Panc1 (cell line): ENCODE measurements at regions of chr14 and their contacts with region 1.

Region 1: DNA sequence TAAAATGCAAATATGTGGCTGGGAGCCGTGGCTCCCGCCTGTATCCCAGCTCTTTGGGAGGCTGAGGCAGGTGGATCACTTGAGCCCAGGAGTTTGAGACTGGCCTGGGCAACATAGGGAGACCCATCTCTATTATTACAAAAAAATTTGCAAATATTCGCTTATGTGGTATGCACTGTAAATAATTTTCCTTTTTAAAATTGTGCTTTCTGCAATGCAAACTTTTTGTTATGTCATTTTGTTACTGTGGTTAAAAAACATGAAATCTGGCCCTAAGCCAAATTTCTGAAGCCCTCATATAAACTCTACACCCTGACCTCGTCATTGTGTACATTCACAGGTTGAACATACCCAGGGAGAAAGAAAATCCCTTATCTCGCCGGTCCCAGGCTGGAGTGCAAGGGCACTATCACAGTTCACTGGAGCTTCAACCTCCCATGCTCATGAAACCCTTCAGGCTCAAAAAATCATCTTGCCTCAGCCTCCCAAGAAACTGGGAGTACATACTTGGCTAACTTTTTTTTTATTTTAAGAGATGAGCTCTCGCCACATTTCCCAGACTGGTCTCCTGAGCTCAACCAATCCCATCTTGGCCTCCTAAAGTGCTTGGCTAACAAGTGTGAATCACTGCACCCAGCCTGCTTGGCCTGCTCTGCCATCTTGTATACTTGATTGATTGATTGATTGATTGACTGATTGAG is 24.7 kb downstream of the TRAPPC6B start:
- DNase-seq: no peak
- ATAC-seq: no peak
- H3K4me3 ChIP-seq: no peak overlapping the region
- H3K27ac ChIP-seq: no peak overlapping the region
- H3K4me1 ChIP-seq: no peaks in the 10 kb centered on the region
- H3K27me3 ChIP-seq: no peaks in the 10 kb centered on the region
- CTCF ChIP-seq: no peak

Region 2: DNA sequence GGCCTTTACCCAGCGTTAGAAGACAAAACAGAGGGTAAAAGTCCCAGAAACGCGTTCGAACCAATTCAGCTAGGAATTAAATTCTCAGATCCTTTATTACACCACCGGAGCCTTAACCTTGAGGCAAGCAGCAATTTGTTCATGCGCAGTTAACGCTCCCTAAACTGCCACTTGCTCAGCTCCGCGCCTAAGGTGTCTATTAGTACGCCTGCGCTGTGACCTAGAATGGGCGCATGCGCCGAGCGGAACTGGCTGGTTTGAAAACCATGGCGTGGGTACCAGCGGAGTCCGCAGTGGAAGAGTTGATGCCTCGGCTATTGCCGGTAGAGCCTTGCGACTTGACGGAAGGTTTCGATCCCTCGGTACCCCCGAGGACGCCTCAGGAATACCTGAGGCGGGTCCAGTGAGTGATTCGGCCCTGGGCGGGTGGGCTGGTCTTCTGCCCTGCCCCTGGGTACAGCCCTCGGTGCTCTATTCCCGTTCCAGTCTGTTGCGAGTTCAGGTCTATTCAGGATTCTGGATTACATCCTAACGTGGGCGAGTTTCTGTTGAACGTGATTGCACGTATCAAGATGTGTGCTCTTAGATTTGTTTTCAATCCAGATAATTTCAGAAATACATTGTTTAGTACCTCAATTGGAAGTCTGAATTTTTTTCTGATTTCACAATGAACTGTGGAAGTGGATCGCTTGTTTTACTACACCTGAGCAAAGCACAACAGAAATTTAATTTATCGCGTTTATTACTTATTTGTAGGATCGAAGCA is 31.2 kb before region 1 on chr14 and contains the start of gene GEMIN2:
- CTCF ChIA-PET with region 1: interaction called, 11 read pairs
- POLR2A ChIA-PET with region 1: no interaction called
- in situ Hi-C with region 1: no loop called
- intact Hi-C with region 1: no loop called
- DNase-seq: peak; percentile 67
- ATAC-seq: peak; percentile 98
- H3K4me3 ChIP-seq: peak within 1 kb of the TSS; percentile 85 to 94
- H3K27ac ChIP-seq: peak within 1 kb of the TSS; percentile 98
- H3K4me1 ChIP-seq: no peaks in the 10 kb centered on the region; the same call in 1 of the 2 replicates
- H3K27me3 ChIP-seq: no peaks in the 10 kb centered on the region
- CTCF ChIP-seq: no peak
- total RNA-seq, gene GEMIN2: 15.1 TPM